PC-9 (cell line): ENCODE measurements at regions of chr5 and their contacts with region 1.

Region 1: DNA sequence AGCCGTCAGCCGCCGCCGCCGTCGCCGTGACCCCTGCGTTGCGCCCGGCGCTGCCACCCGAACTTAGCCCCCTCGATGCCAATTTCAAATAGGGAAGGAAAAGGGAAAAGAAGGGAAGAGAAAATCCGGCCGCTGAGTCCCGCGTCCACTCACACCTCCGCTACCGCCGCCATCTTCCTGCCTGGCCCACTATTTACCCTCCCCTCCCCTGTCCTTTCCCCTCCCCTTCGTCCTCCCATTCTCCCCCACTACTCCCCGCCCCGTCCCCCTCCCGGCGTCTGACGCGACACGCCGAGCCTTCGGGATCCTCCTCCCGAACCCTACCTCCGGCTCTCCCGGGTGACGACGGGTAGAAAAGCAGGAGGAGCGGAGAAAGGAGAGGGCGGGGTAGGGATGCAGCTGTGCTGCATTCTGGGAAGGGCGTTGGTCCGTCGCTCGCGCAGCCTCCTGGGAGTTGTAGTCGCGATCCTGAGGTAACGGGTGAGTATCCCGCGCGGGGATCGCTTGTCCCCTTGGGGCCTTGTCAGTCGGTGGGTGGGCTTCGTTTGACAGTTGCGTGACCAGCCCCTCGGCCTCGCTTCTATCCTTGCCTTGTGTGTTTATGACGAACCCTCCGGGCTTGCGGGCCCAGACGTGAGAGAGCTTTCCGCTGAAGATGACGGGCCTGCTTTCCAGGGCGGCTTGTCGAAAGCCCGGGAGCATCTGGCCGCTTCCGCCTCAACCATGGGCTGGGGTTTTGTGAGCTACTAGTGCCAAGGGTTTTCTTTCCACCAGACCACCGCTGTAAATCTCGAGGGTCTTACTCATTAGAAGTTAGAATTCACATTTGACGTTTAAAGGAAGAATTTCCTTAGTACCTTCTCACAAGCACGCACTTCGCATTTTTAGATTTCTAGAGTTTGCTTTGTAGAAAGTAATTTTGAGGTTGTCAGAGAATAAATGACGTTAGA is at the starts of genes CERT1 and POLK:
- DNase-seq: peak; percentile 93 to 96
- H3K4me3 ChIP-seq: peak within 1 kb of the TSS; percentile 83
- H3K27ac ChIP-seq: peak within 1 kb of the TSS; percentile 64
- H3K4me1 ChIP-seq: peaks cover 22% of the 10 kb centered on the region
- H3K27me3 ChIP-seq: no peaks in the 10 kb centered on the region
- CTCF ChIP-seq: no peak
- total RNA-seq, gene CERT1: 17.6 and 19.5 TPM in 2 replicates
- total RNA-seq, gene POLK: 19.2 and 20.9 TPM in 2 replicates

Region 2: DNA sequence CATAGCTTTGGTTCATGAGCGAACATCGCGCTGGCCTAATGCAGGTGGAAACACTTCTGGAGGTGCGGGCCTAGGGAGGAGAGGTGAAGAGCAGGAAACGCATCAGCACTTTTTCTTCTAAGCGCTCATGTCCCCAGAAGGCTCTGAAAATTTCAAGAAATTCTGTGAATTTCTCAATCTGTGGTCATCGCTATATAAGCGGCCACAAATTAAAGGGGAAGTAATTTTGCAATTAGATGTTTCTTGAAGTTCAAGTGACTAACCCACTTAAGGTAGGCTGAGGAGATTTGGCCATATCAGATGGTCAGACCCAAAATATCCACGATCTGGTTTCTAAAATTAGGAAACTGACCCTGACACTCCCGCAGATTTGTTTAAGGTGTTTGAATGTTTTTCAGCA is 191.4 kb before region 1 on chr5:
- CTCF ChIA-PET with region 1: no interaction called
- POLR2A ChIA-PET with region 1: interaction called, 25 read pairs
- intact Hi-C with region 1: no loop called
- DNase-seq: peak in 1 of 2 experiments; percentile 57
- H3K4me3 ChIP-seq: peak overlapping the region; percentile 21; the same call in 1 of the 2 replicates
- H3K27ac ChIP-seq: peak overlapping the region; percentile 96
- H3K4me1 ChIP-seq: peaks cover 38% of the 10 kb centered on the region
- H3K27me3 ChIP-seq: no peaks in the 10 kb centered on the region
- CTCF ChIP-seq: no peak

Region 3: GRCh38 chr5:75498208-75498777 is 13.4 kb before region 1 on chr5:
- CTCF ChIA-PET with region 1: no interaction called
- POLR2A ChIA-PET with region 1: no interaction called
- intact Hi-C with region 1: no loop called
- DNase-seq: no peak
- H3K4me3 ChIP-seq: no peak overlapping the region
- H3K27ac ChIP-seq: no peak overlapping the region
- H3K4me1 ChIP-seq: no peaks in the 10 kb centered on the region
- H3K27me3 ChIP-seq: no peaks in the 10 kb centered on the region
- CTCF ChIP-seq: no peak

Region 4: GRCh38 chr5:75566710-75567309 is 55.1 kb after region 1 on chr5:
- CTCF ChIA-PET with region 1: no interaction called
- POLR2A ChIA-PET with region 1: no interaction called
- intact Hi-C with region 1: loop called (anchors 5 kb)
- DNase-seq: peak; percentile 22 to 78
- H3K4me3 ChIP-seq: peak overlapping the region; percentile 16; the same call in 1 of the 2 replicates
- H3K27ac ChIP-seq: peak overlapping the region; percentile 24; the same call in 1 of the 2 replicates
- H3K4me1 ChIP-seq: peaks cover 21% of the 10 kb centered on the region
- H3K27me3 ChIP-seq: no peaks in the 10 kb centered on the region
- CTCF ChIP-seq: no peak

Region 5: GRCh38 chr5:75601567-75601966 is 89.9 kb after region 1 on chr5:
- CTCF ChIA-PET with region 1: no interaction called
- POLR2A ChIA-PET with region 1: no interaction called
- intact Hi-C with region 1: no loop called
- DNase-seq: no peak
- H3K4me3 ChIP-seq: no peak overlapping the region
- H3K27ac ChIP-seq: peak overlapping the region; percentile 75
- H3K4me1 ChIP-seq: peaks cover 19% of the 10 kb centered on the region
- H3K27me3 ChIP-seq: no peaks in the 10 kb centered on the region
- CTCF ChIP-seq: no peak

Region 6: DNA sequence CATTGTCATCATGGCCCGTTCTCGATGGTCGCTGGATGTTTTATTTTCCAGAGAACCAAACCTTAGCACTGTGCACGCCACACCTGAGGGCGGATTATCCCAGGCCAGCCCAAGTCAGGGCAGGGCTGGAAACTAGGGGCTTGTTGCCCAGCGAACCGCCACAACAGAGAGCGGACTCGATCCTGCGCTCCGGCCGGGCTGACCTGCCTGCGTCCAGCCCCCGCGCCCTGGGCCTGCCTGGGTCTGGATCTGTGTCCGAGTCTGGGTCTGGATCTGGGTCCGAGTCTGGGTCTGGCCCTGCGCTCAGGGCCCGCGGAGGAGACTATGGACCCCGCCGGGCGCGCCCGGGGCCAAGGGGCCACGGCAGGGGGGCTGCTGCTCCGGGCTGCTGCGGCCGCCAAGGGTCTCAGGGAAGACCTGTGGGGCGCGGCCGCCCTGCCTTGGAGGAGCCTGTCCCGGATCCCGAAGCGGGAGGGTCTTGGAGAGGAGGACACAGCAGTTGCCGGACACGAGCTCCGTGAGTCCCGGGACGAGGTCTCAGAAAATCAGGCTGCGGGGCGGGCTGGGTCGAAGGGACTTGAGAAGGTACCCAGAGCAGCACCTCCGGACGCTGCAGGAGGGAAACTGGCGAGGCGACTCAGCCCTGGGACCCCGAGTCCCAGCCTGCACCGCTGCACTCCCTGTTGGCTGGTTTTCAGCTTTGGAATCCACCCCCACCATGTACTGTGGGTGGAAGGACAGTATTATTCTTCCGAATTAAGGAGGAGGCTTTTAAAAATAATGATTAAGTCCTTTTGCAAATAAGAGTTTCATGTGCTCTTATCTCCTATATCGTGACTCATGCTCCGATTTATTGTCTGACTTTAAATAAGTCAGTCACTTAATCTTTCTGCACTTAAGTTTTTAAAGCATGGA is 99.9 kb after region 1 on chr5 and contains the start of gene ANKDD1B:
- CTCF ChIA-PET with region 1: no interaction called
- POLR2A ChIA-PET with region 1: no interaction called
- intact Hi-C with region 1: no loop called
- DNase-seq: peak; percentile 16 to 54
- H3K4me3 ChIP-seq: peak within 1 kb of the TSS; percentile 60
- H3K27ac ChIP-seq: no peak within 1 kb of the TSS
- H3K4me1 ChIP-seq: no peaks in the 10 kb centered on the region; the same call in 1 of the 2 replicates
- H3K27me3 ChIP-seq: no peaks in the 10 kb centered on the region
- CTCF ChIP-seq: no peak
- total RNA-seq, gene ANKDD1B: 0.20 and 0.31 TPM in 2 replicates

Region 7: DNA sequence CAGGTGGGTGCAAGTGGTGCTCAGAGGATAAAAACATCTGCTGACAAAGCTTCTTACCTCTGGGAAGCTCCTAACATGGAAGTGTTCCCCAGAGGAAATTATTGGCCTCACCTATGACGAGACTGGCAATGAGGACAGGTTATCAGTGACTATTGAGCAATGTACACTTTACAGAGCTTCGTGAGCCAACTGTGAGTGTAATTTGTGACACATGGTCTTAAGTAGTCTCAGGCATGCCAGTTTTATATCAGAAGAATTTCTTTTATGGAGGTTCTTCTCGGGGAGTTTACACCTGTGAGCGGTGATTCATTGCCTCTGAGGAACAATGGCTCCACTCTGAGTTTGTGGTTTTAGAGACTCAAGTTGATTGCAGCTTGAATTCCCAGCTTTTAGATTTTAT is 110.9 kb after region 1 on chr5:
- CTCF ChIA-PET with region 1: no interaction called
- POLR2A ChIA-PET with region 1: no interaction called
- intact Hi-C with region 1: loop called (anchors 5 kb)
- DNase-seq: peak; percentile 46 to 94
- H3K4me3 ChIP-seq: no peak overlapping the region
- H3K27ac ChIP-seq: peak overlapping the region; percentile 47
- H3K4me1 ChIP-seq: peaks cover 23% of the 10 kb centered on the region
- H3K27me3 ChIP-seq: no peaks in the 10 kb centered on the region
- CTCF ChIP-seq: no peak

Region 8: DNA sequence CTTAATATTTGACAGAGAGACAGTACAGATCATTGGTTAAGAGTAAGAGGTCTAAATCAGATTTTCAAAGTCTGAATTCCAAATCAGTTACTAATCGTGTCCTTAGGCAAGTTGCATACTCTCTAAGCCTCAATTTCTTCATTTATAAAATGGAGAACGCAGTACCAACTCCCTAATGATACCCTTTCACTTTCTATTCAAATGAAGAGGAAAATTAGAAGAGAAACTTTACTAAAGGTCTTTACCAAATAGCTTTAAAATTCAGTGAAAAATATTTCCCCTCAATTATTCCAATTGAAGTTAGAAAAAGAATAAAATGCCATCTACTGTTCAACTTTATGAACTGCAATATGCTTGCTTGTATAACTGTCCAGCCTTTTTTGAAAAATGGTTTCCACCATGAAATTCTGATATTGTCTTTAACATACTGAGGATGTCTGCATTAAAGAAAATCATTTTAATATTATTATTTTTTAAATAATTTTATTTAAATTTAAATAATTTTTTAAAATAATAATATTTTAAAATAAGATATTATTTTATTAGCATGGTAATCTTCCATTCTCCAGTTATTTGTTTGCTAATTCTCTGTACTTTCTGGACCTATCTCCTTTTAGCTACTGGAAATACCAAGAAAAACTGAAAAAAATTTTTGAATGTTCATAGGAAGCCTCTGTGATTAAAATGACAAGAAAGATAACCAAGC is 169.6 kb after region 1 on chr5:
- CTCF ChIA-PET with region 1: no interaction called
- POLR2A ChIA-PET with region 1: no interaction called
- intact Hi-C with region 1: loop called (anchors 5 kb)
- DNase-seq: peak in 1 of 2 experiments; percentile 49
- H3K4me3 ChIP-seq: no peak overlapping the region
- H3K27ac ChIP-seq: no peak overlapping the region
- H3K4me1 ChIP-seq: peaks cover 5% of the 10 kb centered on the region; the same call in 1 of the 2 replicates
- H3K27me3 ChIP-seq: no peaks in the 10 kb centered on the region
- CTCF ChIP-seq: peak; percentile 85